A549 (cell line): ENCODE measurements at regions of chr6 and their contacts with region 1.

Region 1: GRCh38 chr6:3929281-3929798 is 80.2 kb downstream of the FAM50B start:
- DNase-seq: no peak
- ATAC-seq: no peak
- H3K4me3 ChIP-seq: no peak overlapping the region
- H3K27ac ChIP-seq: no peak overlapping the region; a peak in 1 of 6 replicates
- H3K4me1 ChIP-seq: peaks cover 13% of the 10 kb centered on the region; the same call in 2 of the 3 replicates
- CTCF ChIP-seq: no peak
- EP300 ChIP-seq: no peak
- POLR2A ChIP-seq: no peak
- RAD21 ChIP-seq: no peak

Region 2: DNA sequence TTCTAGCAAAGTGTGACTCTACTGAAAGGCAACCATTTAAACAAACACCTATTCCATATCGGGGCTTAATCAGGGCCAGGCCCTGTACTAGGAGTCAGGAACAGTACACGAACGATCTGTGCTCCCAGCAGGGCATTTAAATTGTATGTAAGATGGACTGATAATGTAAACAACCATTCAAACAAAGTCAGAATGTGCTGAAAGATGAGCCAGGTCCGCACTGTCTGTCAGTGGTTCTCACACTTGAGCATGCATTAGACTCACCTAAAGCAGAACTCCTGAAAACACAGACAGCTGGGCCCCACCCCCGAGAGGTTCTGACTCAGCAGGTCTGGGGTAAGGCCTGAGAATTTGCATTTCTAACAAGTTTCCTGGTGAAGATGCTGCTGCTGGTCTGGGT is 259.4 kb before region 1 on chr6:
- CTCF ChIA-PET with region 1: no interaction called
- POLR2A ChIA-PET with region 1: no interaction called
- DNase-seq: no peak
- ATAC-seq: no peak
- H3K4me3 ChIP-seq: no peak overlapping the region
- H3K27ac ChIP-seq: no peak overlapping the region
- H3K4me1 ChIP-seq: peaks cover 8% of the 10 kb centered on the region
- CTCF ChIP-seq: no peak
- EP300 ChIP-seq: no peak
- POLR2A ChIP-seq: no peak
- RAD21 ChIP-seq: no peak

Region 3: DNA sequence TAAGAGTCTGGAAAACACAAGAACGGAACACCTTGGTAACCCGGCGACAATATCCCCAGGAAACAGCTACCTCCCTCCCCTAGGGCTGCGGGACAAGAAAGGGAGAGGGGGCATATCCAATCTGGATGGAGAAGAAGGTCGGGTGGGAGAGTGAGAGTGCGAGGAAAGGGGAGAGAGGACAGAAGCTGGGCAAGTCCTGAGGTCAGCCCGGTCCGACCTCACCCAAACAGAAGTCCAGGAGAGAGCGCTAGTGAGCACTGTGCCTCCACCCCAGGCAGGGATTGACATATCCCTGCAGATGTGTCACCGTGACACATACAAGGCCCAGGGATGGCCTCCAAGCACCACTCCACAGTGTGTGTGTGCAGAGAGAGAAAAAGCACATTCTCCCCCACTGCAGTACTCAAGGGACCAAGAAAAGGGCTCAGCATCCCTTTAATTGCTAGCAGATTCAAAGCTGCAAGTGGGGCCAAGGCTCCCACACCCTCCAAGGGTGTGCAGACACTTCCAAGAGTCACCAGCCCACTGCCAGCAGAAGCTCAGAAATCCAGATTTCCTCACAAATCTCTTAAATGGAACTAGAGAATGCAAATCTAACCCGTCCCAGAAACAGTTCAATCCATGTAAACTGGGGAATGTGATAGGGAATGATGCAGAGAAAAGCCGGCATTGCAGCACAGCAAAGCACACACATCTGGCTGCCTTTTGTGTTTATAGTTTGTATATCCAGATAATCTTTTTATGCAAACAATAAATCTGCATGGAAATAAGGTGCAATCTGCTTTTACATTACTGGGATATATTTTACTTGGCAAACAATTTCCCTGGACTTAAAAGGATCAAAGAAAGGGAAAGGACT is 180.9 kb before region 1 on chr6:
- CTCF ChIA-PET with region 1: interaction called, 72 read pairs
- POLR2A ChIA-PET with region 1: no interaction called
- DNase-seq: peak; percentile 75 to 86
- ATAC-seq: peak; percentile 74 to 83
- H3K4me3 ChIP-seq: no peak overlapping the region
- H3K27ac ChIP-seq: peak overlapping the region; percentile 41 to 53; a peak in 2 of 6 replicates
- H3K4me1 ChIP-seq: peaks cover 39% of the 10 kb centered on the region
- CTCF ChIP-seq: peak; percentile 69
- EP300 ChIP-seq: no peak
- POLR2A ChIP-seq: no peak
- RAD21 ChIP-seq: peak; percentile 66 to 72

Region 4: DNA sequence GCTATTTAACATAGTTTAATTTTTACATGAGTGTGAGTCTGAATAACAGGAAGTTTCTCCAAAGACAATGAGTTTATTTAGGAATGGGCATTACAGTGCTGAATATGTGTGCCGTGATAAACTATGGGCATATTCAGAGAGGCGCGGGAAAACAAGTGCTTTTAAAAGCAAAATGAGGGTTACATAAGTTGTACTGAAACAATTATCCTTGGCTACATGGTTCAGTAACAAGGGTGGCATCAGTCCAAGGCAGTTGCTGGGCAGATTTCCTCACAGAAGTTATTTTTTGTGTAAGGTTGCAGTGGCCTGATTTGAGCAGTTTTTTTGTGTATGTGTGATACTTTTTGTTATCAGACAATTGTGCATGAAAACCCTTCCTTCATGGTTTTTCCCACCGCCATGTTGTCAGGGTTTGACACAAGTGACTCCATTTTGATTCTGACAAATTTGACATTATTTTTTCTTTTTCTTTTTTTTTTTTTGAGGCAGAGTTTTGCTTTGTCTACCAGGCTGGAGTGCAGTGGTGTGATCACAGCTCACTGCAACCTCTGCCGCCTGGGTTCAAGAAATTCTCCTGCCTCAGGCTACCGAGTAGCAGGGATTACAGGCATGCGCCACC is 155.6 kb before region 1 on chr6:
- CTCF ChIA-PET with region 1: no interaction called
- POLR2A ChIA-PET with region 1: no interaction called
- DNase-seq: no peak
- ATAC-seq: no peak
- H3K4me3 ChIP-seq: no peak overlapping the region
- H3K27ac ChIP-seq: no peak overlapping the region
- H3K4me1 ChIP-seq: no peaks in the 10 kb centered on the region
- CTCF ChIP-seq: no peak
- EP300 ChIP-seq: no peak
- POLR2A ChIP-seq: no peak
- RAD21 ChIP-seq: no peak

Region 5: DNA sequence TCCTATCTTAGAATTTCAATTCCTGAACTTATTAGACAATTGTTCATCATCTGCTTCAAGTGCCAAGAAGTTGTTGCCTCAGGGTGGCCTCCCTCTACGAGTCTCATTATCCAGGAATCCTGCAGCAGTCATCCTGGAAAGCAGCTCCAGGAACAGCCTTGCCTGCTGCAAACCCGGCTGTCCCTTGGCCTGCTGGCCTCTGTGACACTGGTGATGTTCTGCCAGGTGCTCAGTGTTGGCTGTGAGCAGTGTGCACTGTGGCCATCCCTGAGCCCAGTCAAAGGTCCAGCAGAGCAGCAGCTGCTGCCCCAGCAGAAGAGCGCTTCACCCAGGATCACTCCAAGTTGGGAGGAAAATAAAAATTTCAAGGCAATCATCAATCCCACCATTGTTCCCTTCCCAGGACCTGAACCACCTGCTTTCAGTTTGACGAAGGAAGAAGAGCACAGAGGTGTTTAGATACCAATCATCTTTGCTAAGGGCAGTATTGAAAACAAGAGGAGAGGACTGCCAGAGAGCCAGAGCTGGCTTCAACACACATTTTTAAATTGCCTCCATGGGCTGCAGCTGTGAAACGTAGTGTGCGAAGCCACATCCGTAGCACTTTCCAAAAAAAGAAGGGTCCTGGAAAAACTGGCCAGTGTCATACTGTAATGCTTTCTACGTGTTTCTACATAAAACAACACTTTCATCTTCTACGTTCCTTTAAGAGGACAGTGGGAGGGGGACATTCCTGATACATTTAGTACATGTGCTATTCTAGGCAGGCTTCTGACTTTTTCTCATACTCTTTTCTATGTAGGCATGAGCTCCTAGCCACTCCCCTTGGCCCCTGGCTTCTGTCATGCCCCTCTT is 87.4 kb before region 1 on chr6:
- CTCF ChIA-PET with region 1: interaction called, 97 read pairs
- POLR2A ChIA-PET with region 1: no interaction called
- DNase-seq: peak in 1 of 2 experiments; percentile 14
- ATAC-seq: peak; percentile 43 to 73; a peak in 4 of 6 replicates
- H3K4me3 ChIP-seq: no peak overlapping the region
- H3K27ac ChIP-seq: peak overlapping the region; percentile 40 to 48; a peak in 4 of 6 replicates
- H3K4me1 ChIP-seq: peaks cover 38% of the 10 kb centered on the region
- CTCF ChIP-seq: no peak
- EP300 ChIP-seq: no peak
- POLR2A ChIP-seq: no peak
- RAD21 ChIP-seq: no peak

Region 6: DNA sequence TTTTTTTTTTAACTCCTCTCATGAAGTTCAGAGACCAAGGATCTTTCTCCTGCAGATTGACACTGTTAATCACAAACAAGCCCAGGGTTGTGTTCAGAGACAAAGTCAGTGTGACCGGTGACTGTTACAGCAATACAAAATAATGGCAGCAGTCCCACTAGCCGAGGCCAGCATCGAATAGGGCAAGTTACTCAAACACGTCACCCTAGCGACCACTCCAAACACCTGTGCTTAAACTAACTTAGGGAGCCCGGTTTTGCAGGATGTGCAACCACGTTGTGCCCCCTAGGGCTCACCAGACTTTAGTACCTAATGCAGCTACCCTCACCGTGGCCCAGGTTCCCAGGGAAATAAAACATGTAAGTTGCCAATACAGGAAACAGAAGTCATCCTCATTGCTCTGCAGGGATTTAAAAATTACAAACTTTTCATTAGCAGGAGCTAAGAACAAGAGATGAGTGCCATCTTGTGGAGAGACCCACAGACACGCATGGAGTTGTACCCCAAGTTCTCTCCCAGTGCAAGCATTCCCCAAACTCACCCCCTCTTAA is 42.1 kb before region 1 on chr6:
- CTCF ChIA-PET with region 1: interaction called, 25 read pairs
- POLR2A ChIA-PET with region 1: no interaction called
- DNase-seq: peak in 1 of 2 experiments; percentile 23
- ATAC-seq: peak in 1 of 2 experiments; percentile 10; a peak in 2 of 6 replicates
- H3K4me3 ChIP-seq: no peak overlapping the region
- H3K27ac ChIP-seq: peak overlapping the region; percentile 74 to 86
- H3K4me1 ChIP-seq: peaks cover 54% of the 10 kb centered on the region
- CTCF ChIP-seq: peak; percentile 49
- EP300 ChIP-seq: no peak
- POLR2A ChIP-seq: no peak
- RAD21 ChIP-seq: peak; percentile 61 to 66

Region 7: DNA sequence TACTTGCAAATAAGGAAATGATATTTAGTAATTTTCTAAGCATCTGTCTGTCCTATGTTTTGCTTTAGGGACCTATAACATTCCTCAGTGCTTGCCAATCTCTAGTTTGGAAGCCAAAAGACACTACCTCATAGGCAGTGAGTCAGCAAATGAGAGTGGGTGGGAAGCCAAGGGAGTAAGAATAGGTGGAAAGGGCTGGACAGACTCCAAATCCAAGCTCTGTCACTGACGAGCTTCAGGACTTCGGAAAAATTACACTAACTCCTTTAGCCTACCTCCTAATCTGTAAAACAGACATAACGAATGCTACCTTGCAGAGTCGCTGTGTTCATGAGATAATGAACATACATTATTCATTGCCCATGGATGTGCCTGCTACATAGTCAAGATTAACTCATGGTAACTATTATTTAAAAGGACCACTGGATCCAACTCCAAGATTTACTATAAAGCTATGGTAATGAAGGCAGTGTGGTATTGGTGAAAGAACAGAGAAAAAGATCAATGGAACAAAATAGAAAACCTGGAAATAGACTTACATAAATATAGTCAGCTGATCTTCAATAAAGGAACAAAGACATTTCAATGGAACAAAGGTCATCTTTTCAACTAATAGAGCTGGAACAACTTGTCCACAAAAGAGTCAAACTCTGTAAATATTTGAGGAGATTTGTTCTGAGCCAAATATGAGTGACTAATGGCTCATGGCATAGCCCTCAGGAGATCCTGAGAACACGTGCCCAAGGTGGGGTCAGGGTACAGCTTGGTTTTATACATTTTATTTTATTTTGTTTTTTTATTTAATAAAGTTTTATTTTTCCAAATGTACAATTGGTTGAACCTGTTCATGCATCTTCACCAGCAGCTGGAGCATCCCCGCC is 16.0 kb before region 1 on chr6:
- CTCF ChIA-PET with region 1: interaction called, 55 read pairs
- POLR2A ChIA-PET with region 1: interaction called, 4 read pairs
- DNase-seq: peak; percentile 79 to 92
- ATAC-seq: peak; percentile 88 to 91
- H3K4me3 ChIP-seq: peak overlapping the region; percentile 29; the same call in 1 of the 3 replicates
- H3K27ac ChIP-seq: peak overlapping the region; percentile 83 to 89
- H3K4me1 ChIP-seq: peaks cover 34% of the 10 kb centered on the region
- CTCF ChIP-seq: no peak
- EP300 ChIP-seq: peak; percentile 37 to 68; a peak in 2 of 5 replicates
- POLR2A ChIP-seq: no peak
- RAD21 ChIP-seq: no peak

Region 8: DNA sequence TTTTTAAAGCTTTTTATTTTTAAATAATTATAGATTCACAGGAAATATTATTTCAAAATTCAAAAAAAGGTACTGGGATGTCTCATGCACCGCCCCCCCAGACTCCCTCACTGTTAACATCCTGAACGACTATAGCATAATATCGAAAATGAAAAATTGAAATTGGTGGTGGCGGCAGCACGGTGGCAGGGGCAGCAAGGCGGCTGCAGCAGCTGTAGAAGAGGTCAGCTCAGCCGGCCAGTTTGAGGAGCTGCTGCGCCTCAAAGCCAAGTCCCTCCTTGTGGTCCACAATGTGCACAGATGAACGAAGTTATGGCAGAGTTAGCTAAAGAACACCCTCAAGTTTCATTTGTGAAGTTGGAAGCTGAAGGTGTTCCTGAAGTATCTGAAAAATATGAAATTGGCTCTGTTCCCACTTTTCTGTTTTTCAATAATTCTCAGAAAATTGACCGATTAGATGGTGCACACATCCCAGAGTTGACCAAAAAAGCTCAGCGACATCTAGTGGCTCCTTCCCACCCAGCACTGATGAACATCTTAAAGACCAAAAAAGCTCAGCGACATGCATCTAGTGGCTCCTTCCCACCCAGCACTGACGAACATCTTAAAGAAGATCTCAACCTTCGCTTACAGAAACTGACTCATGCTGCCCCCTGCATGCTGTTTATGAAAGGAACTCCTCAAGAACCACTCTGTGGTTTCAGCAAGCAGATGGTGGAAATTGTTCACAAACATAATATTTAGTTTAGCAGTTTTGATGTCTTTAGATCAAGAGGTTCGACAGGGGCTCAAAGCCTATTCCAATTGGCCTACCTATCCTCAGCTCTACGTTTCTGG is 48.8 kb after region 1 on chr6:
- CTCF ChIA-PET with region 1: interaction called, 31 read pairs
- POLR2A ChIA-PET with region 1: no interaction called
- DNase-seq: peak; percentile 34 to 86
- ATAC-seq: peak; percentile 97 to 99
- H3K4me3 ChIP-seq: no peak overlapping the region
- H3K27ac ChIP-seq: no peak overlapping the region
- H3K4me1 ChIP-seq: peaks cover 9% of the 10 kb centered on the region; the same call in 2 of the 3 replicates
- CTCF ChIP-seq: peak; percentile 73
- EP300 ChIP-seq: no peak
- POLR2A ChIP-seq: no peak
- RAD21 ChIP-seq: peak; percentile 69 to 76